ENCODE measurements at regions of chr12 and their contacts with region 1.

Region 1: GRCh38 chr12:103269946-103270345 is 225.8 kb downstream of the C12orf42 start:
- DNase-seq: no peak
- H3K4me3 ChIP-seq: no peak overlapping the region
- H3K4me3 Mint-ChIP-seq: no peak overlapping the region
- H3K27ac ChIP-seq: no peak overlapping the region
- H3K27ac Mint-ChIP-seq: peak overlapping the region in 2 of 8 donors; percentile 4 to 7
- H3K4me1 ChIP-seq: peaks cover 6% of the 10 kb centered on the region
- H3K4me1 Mint-ChIP-seq: peaks cover 26 to 35% (median 34%) of the 10 kb centered on the region in 3 donors
- H3K27me3 ChIP-seq: no peaks in the 10 kb centered on the region
- H3K27me3 Mint-ChIP-seq: no peaks in the 10 kb centered on the region

Region 2: DNA sequence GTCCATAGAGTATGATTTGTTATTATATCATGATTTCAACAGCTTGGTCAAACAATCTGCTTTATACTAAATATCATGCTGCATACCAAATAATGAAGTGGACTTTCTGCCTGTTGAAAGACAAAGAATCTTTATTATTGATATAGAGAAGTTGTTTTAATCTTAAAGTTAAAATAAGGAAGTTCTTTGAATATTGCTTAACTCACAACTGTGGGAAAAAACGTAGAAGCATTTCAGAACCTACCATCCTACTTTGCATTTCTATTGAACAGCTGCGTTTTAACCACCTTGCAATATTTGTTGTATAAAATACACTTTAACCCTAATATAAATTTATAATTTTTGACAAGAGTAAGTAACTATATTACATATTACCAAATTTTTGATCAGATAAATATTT is 1839.5 kb before region 1 on chr12:
- CTCF ChIA-PET with region 1: no interaction called
- POLR2A ChIA-PET with region 1: interaction called, 11 read pairs
- DNase-seq: no peak
- H3K4me3 ChIP-seq: no peak overlapping the region
- H3K4me3 Mint-ChIP-seq: no peak overlapping the region
- H3K27ac ChIP-seq: no peak overlapping the region
- H3K27ac Mint-ChIP-seq: no peak overlapping the region
- H3K4me1 ChIP-seq: no peaks in the 10 kb centered on the region
- H3K4me1 Mint-ChIP-seq: no peaks in the 10 kb centered on the region
- H3K27me3 ChIP-seq: no peaks in the 10 kb centered on the region
- H3K27me3 Mint-ChIP-seq: peaks cover 4 to 14% of the 10 kb centered on the region in 2 donors

Region 3: GRCh38 chr12:103241184-103241583 is 28.8 kb before region 1 on chr12:
- CTCF ChIA-PET with region 1: no interaction called
- POLR2A ChIA-PET with region 1: no interaction called
- DNase-seq: no peak
- H3K4me3 ChIP-seq: no peak overlapping the region
- H3K4me3 Mint-ChIP-seq: no peak overlapping the region
- H3K27ac ChIP-seq: no peak overlapping the region
- H3K27ac Mint-ChIP-seq: peak overlapping the region in 1 of 8 donors; percentile 59
- H3K4me1 ChIP-seq: no peaks in the 10 kb centered on the region
- H3K4me1 Mint-ChIP-seq: no peaks in the 10 kb centered on the region
- H3K27me3 ChIP-seq: no peaks in the 10 kb centered on the region
- H3K27me3 Mint-ChIP-seq: no peaks in the 10 kb centered on the region

Measured in CD8-positive, alpha-beta memory T cell (primary cell).